ENCODE measurements at regions of chr15 and their contacts with region 1.

Region 1: DNA sequence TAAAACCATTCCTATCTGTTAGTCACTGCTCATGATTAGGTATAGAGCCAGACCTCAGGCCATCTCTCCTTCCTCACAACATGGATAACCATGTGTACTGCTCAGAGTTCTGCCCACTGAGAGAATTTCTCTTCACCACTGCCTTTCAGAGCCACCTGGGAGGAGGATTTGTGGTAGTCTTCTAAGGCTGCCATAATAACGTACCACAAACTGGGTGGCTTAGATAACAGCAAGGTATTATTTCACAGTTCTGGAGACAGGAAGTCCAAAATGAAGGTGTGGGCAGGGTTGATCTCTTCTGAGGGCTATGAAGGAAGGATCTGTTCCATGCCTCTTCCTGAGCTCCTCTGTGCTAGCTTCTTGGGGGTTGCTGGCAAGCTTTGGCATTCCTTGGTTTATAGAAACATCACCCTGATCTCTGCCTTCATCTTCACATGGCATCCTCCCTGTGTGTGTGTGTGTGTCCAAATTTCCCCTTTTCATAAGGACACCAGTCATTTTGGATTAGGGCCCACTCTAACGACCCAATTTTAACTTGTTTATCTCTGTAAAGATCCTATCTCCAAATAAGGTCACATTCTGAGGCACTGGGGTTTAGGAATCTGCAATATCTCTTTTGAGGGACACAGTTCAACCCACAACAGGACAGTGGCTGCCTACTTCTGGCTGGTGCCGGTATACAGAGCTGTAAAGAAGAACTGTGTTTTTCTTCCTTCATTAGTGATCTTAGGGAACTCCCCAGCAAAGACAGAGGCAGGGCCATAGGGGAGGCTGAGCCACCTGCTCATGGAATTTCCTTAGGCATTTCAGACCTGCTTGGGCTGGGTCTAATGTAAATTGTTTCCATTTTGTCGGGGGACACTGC is 42.1 kb upstream of the NOX5 start:
- DNase-seq: peak in 2 of 4 experiments; percentile 30 to 50
- ATAC-seq: peak; percentile 80
- H3K4me3 ChIP-seq: no peak overlapping the region
- H3K27ac ChIP-seq: peak overlapping the region; percentile 57
- H3K4me1 ChIP-seq: peaks cover 5 to 11% of the 10 kb centered on the region in 2 experiments; a peak in 4 of 5 replicates
- H3K27me3 ChIP-seq: no peaks in the 10 kb centered on the region
- CTCF ChIP-seq: no peak
- EP300 ChIP-seq: no peak
- POLR2A ChIP-seq: no peak
- RAD21 ChIP-seq: no peak

Region 2: DNA sequence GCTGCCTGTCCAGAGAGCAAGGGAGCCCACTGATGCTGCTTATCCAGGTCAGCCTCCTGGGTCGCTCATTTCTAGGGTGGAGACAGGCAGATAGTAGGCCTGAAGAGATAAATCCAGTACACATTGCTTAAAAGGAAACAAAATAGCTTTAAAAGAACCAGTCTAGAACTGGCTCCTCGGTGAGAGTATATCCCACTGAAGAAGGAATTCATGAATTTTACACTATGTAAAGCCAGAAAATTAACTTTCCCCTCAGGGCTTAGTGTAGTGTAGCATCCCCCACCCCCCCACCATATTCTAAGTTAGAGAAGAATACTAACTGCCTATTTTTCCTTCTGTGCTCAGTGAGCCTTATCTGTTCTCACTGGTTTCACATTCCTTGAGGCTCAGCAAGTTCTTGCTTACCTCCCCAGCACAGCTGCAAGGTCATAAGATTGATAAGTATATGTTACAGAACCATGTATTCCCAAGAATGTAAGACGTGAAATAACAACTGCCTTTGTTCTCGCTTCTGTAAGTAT is 11.6 kb after region 1 on chr15:
- CTCF ChIA-PET with region 1: no interaction called
- POLR2A ChIA-PET with region 1: interaction called, 14 read pairs
- in situ Hi-C with region 1: no loop called
- intact Hi-C with region 1: no loop called
- DNase-seq: peak; percentile 42 to 84 (median 52)
- ATAC-seq: peak; percentile 91
- H3K4me3 ChIP-seq: no peak overlapping the region
- H3K27ac ChIP-seq: peak overlapping the region; percentile 58
- H3K4me1 ChIP-seq: peaks cover 24 to 29% of the 10 kb centered on the region in 2 experiments
- H3K27me3 ChIP-seq: no peaks in the 10 kb centered on the region
- CTCF ChIP-seq: no peak
- EP300 ChIP-seq: peak; percentile 87
- POLR2A ChIP-seq: no peak
- RAD21 ChIP-seq: peak in 1 of 2 experiments; percentile 18; a peak in 1 of 4 replicates